CD8-positive, alpha-beta T cell (primary cell): ENCODE measurements at regions of chr11 and their contacts with region 1.

Region 1: GRCh38 chr11:35383953-35384352 is 35.4 kb downstream of the SLC1A2 start:
- DNase-seq: no peak
- ATAC-seq: no peak
- H3K4me3 ChIP-seq: no peak overlapping the region
- H3K4me3 Mint-ChIP-seq: no peak overlapping the region
- H3K27ac ChIP-seq: no peak overlapping the region
- H3K27ac Mint-ChIP-seq: no peak overlapping the region
- H3K4me1 ChIP-seq: no peaks in the 10 kb centered on the region
- H3K4me1 Mint-ChIP-seq: no peaks in the 10 kb centered on the region
- H3K27me3 ChIP-seq: no peaks in the 10 kb centered on the region
- H3K27me3 Mint-ChIP-seq: no peaks in the 10 kb centered on the region
- CTCF ChIP-seq: no peak

Region 2: GRCh38 chr11:35404388-35404775 is 20.4 kb after region 1 on chr11:
- CTCF ChIA-PET with region 1: no interaction called
- POLR2A ChIA-PET with region 1: no interaction called
- intact Hi-C with region 1: loop called in 1 of 2 experiments (anchors 2 kb)
- DNase-seq: peak in 2 of 9 experiments; percentile 12 to 19
- ATAC-seq: no peak
- H3K4me3 ChIP-seq: no peak overlapping the region
- H3K4me3 Mint-ChIP-seq: no peak overlapping the region
- H3K27ac ChIP-seq: no peak overlapping the region
- H3K27ac Mint-ChIP-seq: no peak overlapping the region
- H3K4me1 ChIP-seq: no peaks in the 10 kb centered on the region
- H3K4me1 Mint-ChIP-seq: no peaks in the 10 kb centered on the region
- H3K27me3 ChIP-seq: no peaks in the 10 kb centered on the region
- H3K27me3 Mint-ChIP-seq: peaks cover 8% of the 10 kb centered on the region
- CTCF ChIP-seq: no peak

Region 3: GRCh38 chr11:36056160-36056751 is 672.3 kb after region 1 on chr11:
- CTCF ChIA-PET with region 1: no interaction called
- POLR2A ChIA-PET with region 1: no interaction called
- intact Hi-C with region 1: no loop called
- DNase-seq: no peak
- ATAC-seq: no peak
- H3K4me3 ChIP-seq: no peak overlapping the region
- H3K4me3 Mint-ChIP-seq: no peak overlapping the region
- H3K27ac ChIP-seq: no peak overlapping the region
- H3K27ac Mint-ChIP-seq: no peak overlapping the region
- H3K4me1 ChIP-seq: no peaks in the 10 kb centered on the region
- H3K4me1 Mint-ChIP-seq: no peaks in the 10 kb centered on the region
- H3K27me3 ChIP-seq: no peaks in the 10 kb centered on the region
- H3K27me3 Mint-ChIP-seq: peaks cover 17% of the 10 kb centered on the region
- CTCF ChIP-seq: no peak

Region 4: DNA sequence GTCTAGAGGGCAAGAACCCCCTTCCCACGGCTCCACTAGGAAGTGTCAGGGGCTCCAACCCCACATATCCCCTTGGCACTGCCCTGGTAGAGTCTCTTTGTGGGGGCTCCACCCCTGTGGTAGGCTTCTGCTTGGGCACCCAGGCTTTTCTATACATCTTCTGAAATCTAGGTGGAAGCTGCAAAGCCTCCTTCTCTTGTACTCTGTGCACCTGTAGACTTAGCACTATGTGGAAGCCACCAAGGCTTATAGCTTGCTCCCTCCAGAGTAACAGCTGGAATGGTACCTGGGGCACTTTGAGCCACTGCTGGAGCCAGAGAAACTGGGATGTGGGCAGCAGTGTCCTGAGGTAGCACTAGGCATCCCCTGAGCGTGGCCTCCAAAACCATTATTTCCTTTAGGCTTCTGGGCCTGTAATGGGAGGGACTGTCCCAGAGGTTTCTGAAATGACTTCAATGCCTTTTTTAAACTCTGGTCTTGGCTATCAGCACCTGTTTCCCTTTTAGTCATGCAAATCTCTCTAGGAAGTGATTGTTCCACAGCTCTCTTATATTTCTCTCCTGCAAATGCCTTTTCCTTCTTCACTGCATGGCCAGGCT is 1057.8 kb after region 1 on chr11:
- CTCF ChIA-PET with region 1: no interaction called
- POLR2A ChIA-PET with region 1: no interaction called
- intact Hi-C with region 1: no loop called
- DNase-seq: no peak
- ATAC-seq: no peak
- H3K4me3 ChIP-seq: no peak overlapping the region
- H3K4me3 Mint-ChIP-seq: no peak overlapping the region
- H3K27ac ChIP-seq: no peak overlapping the region
- H3K27ac Mint-ChIP-seq: peak overlapping the region; percentile 24
- H3K4me1 ChIP-seq: no peaks in the 10 kb centered on the region
- H3K4me1 Mint-ChIP-seq: no peaks in the 10 kb centered on the region
- H3K27me3 ChIP-seq: no peaks in the 10 kb centered on the region
- H3K27me3 Mint-ChIP-seq: no peaks in the 10 kb centered on the region
- CTCF ChIP-seq: no peak